Activated CD4-positive, alpha-beta memory T cell treated with anti-CD3 and anti-CD28 coated beads for 36 hours (primary cell): ENCODE measurements at regions of chr1 and their contacts with region 1.

Region 1: GRCh38 chr1:212414328-212415106 is at the start of gene PACC1:
- DNase-seq: peak; percentile 94
- H3K4me3 Mint-ChIP-seq: peak within 1 kb of the TSS; percentile 97
- H3K27ac Mint-ChIP-seq: peak within 1 kb of the TSS; percentile 74
- H3K4me1 Mint-ChIP-seq: peaks cover 20% of the 10 kb centered on the region
- H3K27me3 Mint-ChIP-seq: no peaks in the 10 kb centered on the region
- total RNA-seq, gene PACC1: 9.6 to 10.0 TPM

Region 2: GRCh38 chr1:212432706-212433576 is 18.4 kb after region 1 on chr1 and contains the start of gene NENF:
- CTCF ChIA-PET with region 1: no interaction called
- POLR2A ChIA-PET with region 1: no interaction called
- intact Hi-C with region 1: loop called (anchors 1 kb)
- DNase-seq: peak; percentile 84
- H3K4me3 Mint-ChIP-seq: peak within 1 kb of the TSS; percentile 73
- H3K27ac Mint-ChIP-seq: no peak within 1 kb of the TSS
- H3K4me1 Mint-ChIP-seq: peaks cover 33% of the 10 kb centered on the region
- H3K27me3 Mint-ChIP-seq: no peaks in the 10 kb centered on the region
- total RNA-seq, gene NENF: 38.4 to 42.7 TPM

Region 3: DNA sequence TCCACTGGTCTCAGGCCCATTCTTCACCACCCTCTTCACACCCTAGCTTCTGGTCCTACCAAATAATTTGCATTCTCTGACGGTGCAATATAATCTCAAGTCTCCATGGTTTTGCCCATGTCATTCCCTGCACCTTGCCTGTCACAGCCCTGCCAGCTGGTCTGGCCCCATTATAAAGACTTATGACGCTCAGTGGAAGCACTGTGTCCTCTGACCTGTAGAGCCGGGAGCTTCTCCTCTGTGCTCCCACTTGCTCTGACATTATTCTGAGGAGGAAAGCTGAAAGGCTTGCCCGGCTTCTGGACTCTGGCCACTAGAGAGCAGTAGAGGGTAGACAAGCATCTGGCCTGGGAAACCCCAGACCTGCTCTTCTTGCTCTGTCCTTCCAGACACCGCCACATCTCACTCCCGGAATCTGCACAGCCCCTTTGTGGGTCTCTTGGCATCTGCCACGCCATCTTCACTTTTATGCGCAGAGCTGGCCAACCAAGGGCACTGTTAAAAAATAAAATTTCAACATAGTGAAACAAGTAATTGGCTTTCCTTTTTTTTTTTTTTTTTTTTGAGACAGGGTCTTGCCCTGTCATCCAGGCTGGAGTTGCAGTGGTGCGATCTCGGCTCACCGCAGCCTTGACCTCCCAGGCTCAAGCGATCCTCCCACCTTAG is 62.6 kb after region 1 on chr1:
- CTCF ChIA-PET with region 1: no interaction called
- POLR2A ChIA-PET with region 1: no interaction called
- intact Hi-C with region 1: no loop called
- DNase-seq: peak; percentile 87
- H3K4me3 Mint-ChIP-seq: peak overlapping the region; percentile 11
- H3K27ac Mint-ChIP-seq: no peak overlapping the region
- H3K4me1 Mint-ChIP-seq: peaks cover 14% of the 10 kb centered on the region
- H3K27me3 Mint-ChIP-seq: peaks cover 6% of the 10 kb centered on the region